Ascending aorta (tissue), 2 donors: ENCODE measurements at regions of chr4 and their contacts with region 1.

Region 1: GRCh38 chr4:139295206-139295941 is 5.9 kb upstream of the NAA15 start:
- DNase-seq: peak; percentile 79 to 99
- H3K4me3 ChIP-seq: peak overlapping the region; percentile 85 to 87
- H3K27ac ChIP-seq: peak overlapping the region; percentile 76 to 78
- H3K4me1 ChIP-seq: peaks cover 0 to 27% of the 10 kb centered on the region in 2 donors
- H3K27me3 ChIP-seq: no peaks in the 10 kb centered on the region
- CTCF ChIP-seq: peak; percentile 93 to 95 (median 94)

Region 2: DNA sequence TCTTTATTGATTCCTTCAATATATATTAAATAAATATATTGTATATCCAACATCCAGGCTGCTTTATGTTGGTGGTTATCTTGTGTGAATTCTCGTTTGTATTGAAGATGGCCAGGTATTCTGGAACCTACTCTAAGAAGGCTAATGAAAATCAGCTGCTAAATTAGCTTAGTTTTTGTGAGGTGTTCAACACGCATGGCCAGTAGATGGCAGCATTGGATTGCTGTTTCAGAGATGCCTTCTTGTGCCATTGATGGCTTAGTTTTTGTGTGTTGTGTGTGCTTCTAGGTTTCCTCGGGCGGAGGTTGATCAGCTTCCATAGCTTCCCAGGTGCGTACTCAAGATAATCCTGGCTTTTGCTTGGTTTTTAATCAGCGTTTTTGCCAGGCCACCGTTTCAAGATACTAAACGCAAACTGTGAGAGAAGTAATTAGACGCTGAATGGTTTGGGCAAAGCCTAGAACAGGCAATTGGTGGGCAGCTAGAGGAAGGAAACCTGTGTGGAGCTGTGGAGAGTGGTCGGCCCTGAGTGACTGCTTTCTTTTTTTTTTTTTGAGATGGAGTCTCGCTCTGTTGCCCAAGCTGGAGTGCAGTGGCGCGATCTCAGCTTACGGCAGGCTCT is 264.6 kb before region 1 on chr4:
- intact Hi-C with region 1: loop called (anchors 1 kb)
- DNase-seq: peak in 1 of 2 donors; percentile 82
- H3K4me3 ChIP-seq: no peak overlapping the region
- H3K27ac ChIP-seq: no peak overlapping the region
- H3K4me1 ChIP-seq: no peaks in the 10 kb centered on the region
- H3K27me3 ChIP-seq: no peaks in the 10 kb centered on the region
- CTCF ChIP-seq: peak; percentile 52 to 82 (median 75)

Region 3: DNA sequence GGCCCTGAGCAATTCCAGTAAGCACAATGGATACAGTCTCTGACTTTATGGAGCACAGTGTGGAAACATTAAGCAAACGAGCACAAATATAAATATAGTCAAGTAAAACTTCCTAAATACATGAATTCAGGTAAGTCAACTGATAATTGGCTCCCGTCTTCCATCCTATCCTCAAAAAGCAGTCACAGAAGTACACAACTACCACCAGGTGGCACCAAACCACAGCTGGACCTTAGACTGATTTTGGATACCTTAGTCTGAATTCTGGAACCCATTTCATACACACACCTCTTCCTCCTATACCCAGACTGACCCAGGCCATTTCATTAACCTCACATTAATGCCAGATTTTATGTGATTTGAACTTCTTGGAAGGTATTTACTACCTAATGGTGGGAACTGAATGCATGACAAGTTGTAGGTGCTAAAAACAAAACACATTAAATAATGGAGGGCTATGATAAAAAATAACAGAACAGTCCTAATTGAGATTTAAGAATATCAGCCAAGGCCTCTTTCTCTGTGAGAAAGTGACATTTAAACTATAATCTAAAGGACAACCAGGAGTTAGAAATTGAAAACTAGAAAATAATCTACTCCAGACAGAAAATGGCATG is 195.9 kb before region 1 on chr4:
- intact Hi-C with region 1: loop called (anchors 1 kb)
- DNase-seq: peak in 1 of 2 donors; percentile 74
- H3K4me3 ChIP-seq: no peak overlapping the region
- H3K27ac ChIP-seq: no peak overlapping the region
- H3K4me1 ChIP-seq: no peaks in the 10 kb centered on the region
- H3K27me3 ChIP-seq: no peaks in the 10 kb centered on the region
- CTCF ChIP-seq: peak; percentile 67 to 80 (median 74)

Region 4: GRCh38 chr4:140408974-140409373 is 1113.6 kb after region 1 on chr4:
- intact Hi-C with region 1: no loop called
- DNase-seq: no peak
- H3K4me3 ChIP-seq: no peak overlapping the region
- H3K27ac ChIP-seq: no peak overlapping the region
- H3K4me1 ChIP-seq: no peaks in the 10 kb centered on the region
- H3K27me3 ChIP-seq: no peaks in the 10 kb centered on the region
- CTCF ChIP-seq: no peak